Upper lobe of right lung (tissue), 1 donor: ENCODE measurements at regions of chr2 and their contacts with region 1.

Region 1: DNA sequence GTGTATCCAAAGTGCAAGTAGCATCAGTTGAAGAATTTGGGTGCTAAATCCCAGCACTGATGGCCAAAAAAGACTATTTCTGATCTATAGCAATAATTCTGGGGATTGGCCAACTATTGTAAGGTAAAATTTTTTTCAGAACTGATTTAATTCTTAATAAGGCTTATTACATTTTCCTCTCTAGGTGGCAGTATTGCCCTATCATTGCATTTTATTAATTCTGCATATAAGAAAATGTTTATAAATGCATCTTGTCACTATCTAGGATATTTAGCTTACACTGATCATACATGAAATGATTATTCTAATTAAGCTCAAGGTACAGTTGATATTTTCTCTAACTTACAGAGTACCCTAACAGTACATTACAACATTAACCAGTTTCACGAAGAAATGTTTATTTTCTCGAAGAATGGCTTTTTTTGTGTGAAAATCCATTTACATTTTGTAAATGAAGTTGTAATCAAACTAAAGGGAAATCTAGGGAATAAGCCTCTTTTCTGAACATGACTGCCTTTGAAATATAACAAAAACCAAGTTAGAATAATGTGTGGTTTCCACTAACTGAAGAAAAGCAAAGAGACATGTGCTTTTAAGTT is 11.0 kb downstream of the TTN start:
- DNase-seq: no peak
- ATAC-seq: no peak
- H3K4me3 ChIP-seq: no peak overlapping the region
- H3K27ac ChIP-seq: no peak overlapping the region
- H3K4me1 ChIP-seq: no peaks in the 10 kb centered on the region
- H3K27me3 ChIP-seq: no peaks in the 10 kb centered on the region
- CTCF ChIP-seq: peak; percentile 63

Region 2: DNA sequence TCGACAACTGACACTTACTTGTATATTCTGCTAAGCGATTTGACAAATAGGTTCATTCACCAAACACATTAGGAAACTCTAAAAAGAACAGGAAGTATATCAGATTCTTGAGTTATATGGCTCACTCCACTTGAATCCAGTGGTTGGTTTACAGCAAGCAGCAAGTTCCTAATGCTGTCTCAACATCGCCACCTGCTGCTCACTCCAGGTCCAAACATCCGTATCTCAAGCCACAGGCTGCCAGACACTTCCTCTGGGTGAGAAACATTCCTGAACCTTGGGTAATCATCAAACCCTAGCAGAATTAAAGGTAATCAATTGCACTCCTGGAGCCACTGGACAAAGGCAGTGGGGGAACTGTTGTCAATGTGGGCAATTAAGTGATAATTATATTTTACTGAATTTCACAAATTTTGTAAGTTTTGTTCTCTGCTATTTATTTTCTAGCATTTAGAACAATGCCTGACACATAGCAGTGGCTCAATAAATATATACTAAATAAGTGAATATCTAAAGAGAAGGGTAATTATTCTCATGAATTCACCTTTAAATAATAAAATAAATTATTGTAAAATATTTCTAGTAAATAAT is 118.2 kb after region 1 on chr2:
- intact Hi-C with region 1: loop called (anchors 10 kb)
- DNase-seq: peak; percentile 84
- ATAC-seq: peak; percentile 99
- H3K4me3 ChIP-seq: no peak overlapping the region
- H3K27ac ChIP-seq: no peak overlapping the region
- H3K4me1 ChIP-seq: no peaks in the 10 kb centered on the region
- H3K27me3 ChIP-seq: no peaks in the 10 kb centered on the region
- CTCF ChIP-seq: peak; percentile 82

Region 3: GRCh38 chr2:179487010-179487731 is 691.0 kb after region 1 on chr2:
- intact Hi-C with region 1: no loop called
- DNase-seq: no peak
- ATAC-seq: peak; percentile 88
- H3K4me3 ChIP-seq: no peak overlapping the region
- H3K27ac ChIP-seq: peak overlapping the region; percentile 45
- H3K4me1 ChIP-seq: no peaks in the 10 kb centered on the region
- H3K27me3 ChIP-seq: no peaks in the 10 kb centered on the region
- CTCF ChIP-seq: no peak